ENCODE measurements at regions of chr22 and their contacts with region 1.

Region 1: GRCh38 chr22:20456064-20456721 is 18.6 kb upstream of the SCARF2 start:
- H3K4me3 Mint-ChIP-seq: no peak overlapping the region
- H3K27ac Mint-ChIP-seq: no peak overlapping the region
- H3K4me1 Mint-ChIP-seq: peaks cover 25% of the 10 kb centered on the region
- H3K27me3 Mint-ChIP-seq: no peaks in the 10 kb centered on the region

Region 2: GRCh38 chr22:20418211-20418788 is 37.9 kb before region 1 on chr22:
- intact Hi-C with region 1: loop called (anchors 1 kb)
- H3K4me3 Mint-ChIP-seq: peak overlapping the region; percentile 57
- H3K27ac Mint-ChIP-seq: no peak overlapping the region
- H3K4me1 Mint-ChIP-seq: no peaks in the 10 kb centered on the region
- H3K27me3 Mint-ChIP-seq: peaks cover 18% of the 10 kb centered on the region

Region 3: GRCh38 chr22:20429254-20430100 is 26.7 kb before region 1 on chr22:
- intact Hi-C with region 1: loop called (anchors 1 kb)
- H3K4me3 Mint-ChIP-seq: peak overlapping the region; percentile 74
- H3K27ac Mint-ChIP-seq: no peak overlapping the region
- H3K4me1 Mint-ChIP-seq: peaks cover 34% of the 10 kb centered on the region
- H3K27me3 Mint-ChIP-seq: peaks cover 93% of the 10 kb centered on the region

Region 4: DNA sequence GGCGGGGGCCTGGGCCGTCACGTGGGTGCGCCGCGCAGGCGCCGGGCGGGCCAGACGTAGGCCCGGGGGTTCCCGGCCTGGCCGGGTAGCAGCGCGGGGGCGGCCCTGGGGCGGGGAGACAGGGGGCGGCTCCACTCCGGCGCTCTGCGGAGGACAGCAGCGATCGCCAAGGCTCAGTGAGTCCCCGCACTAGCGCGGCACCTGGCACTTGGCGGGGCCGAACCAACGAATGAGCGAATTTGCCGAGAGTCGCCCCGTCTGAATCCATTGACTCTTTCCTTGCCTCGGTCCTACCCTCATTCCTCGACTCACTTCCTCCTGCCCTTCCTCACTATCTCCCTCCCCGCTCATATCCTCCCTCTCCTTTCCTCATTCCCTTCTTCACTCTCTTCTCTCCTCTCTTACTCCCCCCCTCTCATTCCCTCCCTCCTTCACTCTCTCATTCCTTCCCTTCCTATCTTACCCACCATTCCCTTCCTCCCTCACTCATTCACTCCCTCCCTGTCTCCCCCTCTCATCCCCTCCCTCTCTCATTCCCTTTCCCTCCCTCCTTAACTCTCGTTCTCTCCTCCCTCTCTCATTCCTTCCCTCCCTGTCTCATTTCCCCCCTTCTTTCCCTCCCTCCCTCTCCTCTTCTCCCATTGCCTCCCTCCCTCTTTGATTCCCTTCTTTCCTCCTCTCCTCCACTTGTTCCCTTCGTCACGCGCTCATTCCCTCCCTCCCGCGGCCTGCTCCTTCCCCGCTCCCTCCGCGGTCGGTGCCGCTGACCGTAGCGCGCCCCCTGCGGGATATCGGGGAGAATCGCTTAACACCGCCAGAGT is 39.9 kb after region 1 on chr22:
- intact Hi-C with region 1: loop called (anchors 2 kb)
- H3K4me3 Mint-ChIP-seq: peak overlapping the region; percentile 88
- H3K27ac Mint-ChIP-seq: peak overlapping the region; percentile 94
- H3K4me1 Mint-ChIP-seq: peaks cover 40% of the 10 kb centered on the region
- H3K27me3 Mint-ChIP-seq: no peaks in the 10 kb centered on the region

Region 5: GRCh38 chr22:20523086-20523983 is 67.1 kb after region 1 on chr22:
- intact Hi-C with region 1: no loop called
- H3K4me3 Mint-ChIP-seq: no peak overlapping the region
- H3K27ac Mint-ChIP-seq: no peak overlapping the region
- H3K4me1 Mint-ChIP-seq: peaks cover 65% of the 10 kb centered on the region
- H3K27me3 Mint-ChIP-seq: no peaks in the 10 kb centered on the region

Measured in dendritic cell treated with granulocyte-macrophage colony-stimulating factor and Interleukin-4, amounts not matched to agents 40 ng/mL and 50 ng/mL, for 4 days (primary cell).